HepG2 (cell line): ENCODE measurements at regions of chr16 and their contacts with region 1.

Region 1: GRCh38 chr16:31117391-31118197 is at the start of gene KAT8:
- DNase-seq: peak; percentile 99
- ATAC-seq: peak; percentile 93
- H3K4me3 ChIP-seq: peak within 1 kb of the TSS; percentile 67 to 83 (median 81)
- H3K27ac ChIP-seq: peak within 1 kb of the TSS; percentile 70
- H3K4me1 ChIP-seq: peaks cover 36% of the 10 kb centered on the region
- H3K27me3 ChIP-seq: no peaks in the 10 kb centered on the region; a peak in 1 of 5 replicates
- CTCF ChIP-seq: peak; percentile 10; the same call in 1 of the 2 replicates
- EP300 ChIP-seq: 0 out of 4 replicates have a peak, but pooled peaks of 1 of the 2 experiments have one; percentile 8
- POLR2A ChIP-seq: peak; percentile 80 to 94
- RAD21 ChIP-seq: peak; percentile 24; the same call in 1 of the 2 replicates
- total RNA-seq, gene KAT8: 69.5 and 79.0 TPM in 2 replicates

Region 2: GRCh38 chr16:30957456-30958174 is 160.0 kb before region 1 on chr16 and contains the start of gene SETD1A:
- CTCF ChIA-PET with region 1: no interaction called
- POLR2A ChIA-PET with region 1: interaction called, 15 read pairs
- in situ Hi-C with region 1: no loop called
- intact Hi-C with region 1: no loop called
- DNase-seq: peak; percentile 93
- ATAC-seq: peak; percentile 65
- H3K4me3 ChIP-seq: peak within 1 kb of the TSS; percentile 84 to 98 (median 93)
- H3K27ac ChIP-seq: peak within 1 kb of the TSS; percentile 97
- H3K4me1 ChIP-seq: peaks cover 56% of the 10 kb centered on the region
- H3K27me3 ChIP-seq: no peaks in the 10 kb centered on the region; a peak in 1 of 5 replicates
- CTCF ChIP-seq: 0 out of 2 replicates have a peak, but pooled peaks have one; percentile 4
- EP300 ChIP-seq: peak in 1 of 2 experiments; percentile 35; a peak in 2 of 4 replicates
- POLR2A ChIP-seq: no peak; a peak in 2 of 4 replicates
- RAD21 ChIP-seq: peak; percentile 47; the same call in 1 of the 2 replicates
- total RNA-seq, gene SETD1A: 3.6 and 5.6 TPM in 2 replicates

Region 3: DNA sequence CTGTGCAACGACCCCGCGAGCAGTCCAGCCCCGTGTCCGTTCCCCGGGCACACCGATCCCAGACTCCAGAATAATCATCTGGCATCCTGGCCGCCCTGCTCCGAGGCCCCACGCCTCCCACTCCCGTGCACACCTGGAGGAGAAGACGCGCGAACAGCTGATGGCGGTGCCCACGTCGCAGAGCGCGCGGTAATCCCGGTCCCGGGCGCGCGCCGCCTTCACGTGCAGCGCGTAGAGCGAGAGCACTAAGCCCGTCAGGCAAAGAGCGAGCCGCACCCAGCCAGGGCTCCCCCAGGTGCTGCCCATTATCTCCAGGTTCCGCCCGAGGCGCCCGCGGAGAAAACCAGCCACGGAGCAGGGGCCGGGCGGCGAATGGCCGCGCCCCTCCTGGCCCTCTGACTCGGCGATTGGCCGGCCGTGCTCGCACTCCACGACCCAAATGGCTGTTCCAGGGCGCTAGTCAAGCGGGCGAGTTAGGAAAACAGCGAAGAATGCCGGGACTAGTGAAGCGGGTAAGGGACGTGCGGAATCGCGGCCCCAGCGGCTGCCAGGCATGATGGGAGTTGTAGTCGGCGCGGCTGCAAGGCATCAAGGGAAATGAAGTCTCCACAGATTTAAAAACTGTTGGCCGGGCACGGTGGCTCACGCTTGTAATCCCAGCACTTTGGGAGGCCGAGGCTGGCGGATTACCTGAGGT is 23.0 kb before region 1 on chr16 and contains the start of gene VKORC1:
- CTCF ChIA-PET with region 1: no interaction called
- POLR2A ChIA-PET with region 1: interaction called, 32 read pairs
- in situ Hi-C with region 1: no loop called
- intact Hi-C with region 1: no loop called
- DNase-seq: peak; percentile 98
- ATAC-seq: peak; percentile 95
- H3K4me3 ChIP-seq: peak within 1 kb of the TSS; percentile 80 to 100 (median 82)
- H3K27ac ChIP-seq: peak within 1 kb of the TSS; percentile 84
- H3K4me1 ChIP-seq: peaks cover 27% of the 10 kb centered on the region
- H3K27me3 ChIP-seq: no peaks in the 10 kb centered on the region; a peak in 1 of 5 replicates
- CTCF ChIP-seq: peak; percentile 44
- EP300 ChIP-seq: peak in 1 of 2 experiments; percentile 44; a peak in 1 of 4 replicates
- POLR2A ChIP-seq: peak; percentile 84 to 90
- RAD21 ChIP-seq: peak; percentile 32; the same call in 1 of the 2 replicates
- total RNA-seq, gene VKORC1: 92.1 and 141 TPM in 2 replicates

Region 4: DNA sequence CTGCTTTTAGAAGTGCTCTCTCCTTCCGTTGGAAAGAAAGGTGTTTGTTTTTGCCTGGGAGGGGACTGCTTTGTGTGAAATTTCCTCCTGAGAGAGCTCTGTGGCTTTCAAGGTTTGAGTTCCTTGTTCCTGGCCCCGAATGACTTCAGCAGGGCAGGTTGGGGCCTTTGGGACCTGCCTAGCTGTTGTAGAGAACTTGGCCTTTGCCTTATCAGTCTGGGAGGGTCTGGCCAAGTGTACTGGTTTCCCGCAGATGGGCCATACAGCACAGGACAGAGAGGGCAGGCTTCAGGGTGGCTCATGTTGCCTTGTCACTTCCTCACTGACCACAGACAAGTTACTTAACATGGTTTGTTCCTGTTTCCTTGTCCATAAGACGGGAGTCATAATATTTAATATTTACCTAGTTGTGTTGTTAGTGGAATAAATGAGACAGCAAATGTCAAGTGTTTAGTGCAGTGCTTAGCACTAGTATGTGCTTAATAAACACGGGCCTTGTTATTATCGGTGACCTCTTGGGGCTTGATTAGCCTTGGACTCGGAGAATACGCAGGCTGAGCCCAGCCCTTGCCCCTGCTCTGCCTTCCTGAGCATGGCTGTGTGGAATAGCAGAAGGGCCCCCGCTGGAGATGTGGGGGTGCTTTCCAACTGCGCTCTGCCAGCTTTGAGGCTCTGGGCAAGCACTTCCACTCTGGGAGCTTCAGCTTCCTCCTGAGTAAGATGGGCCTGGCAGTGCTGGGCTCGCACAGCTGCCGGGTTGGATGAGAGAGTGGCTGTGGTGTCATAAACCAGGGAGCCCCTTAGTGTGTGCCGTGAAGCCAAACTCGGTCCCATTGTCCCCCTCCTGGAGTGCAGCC is 11.3 kb after region 1 on chr16:
- CTCF ChIA-PET with region 1: no interaction called
- POLR2A ChIA-PET with region 1: interaction called, 275 read pairs
- in situ Hi-C with region 1: no loop called
- intact Hi-C with region 1: no loop called
- DNase-seq: no peak
- ATAC-seq: no peak
- H3K4me3 ChIP-seq: no peak overlapping the region
- H3K27ac ChIP-seq: no peak overlapping the region
- H3K4me1 ChIP-seq: peaks cover 4% of the 10 kb centered on the region; the same call in 1 of the 2 replicates
- H3K27me3 ChIP-seq: no peaks in the 10 kb centered on the region
- CTCF ChIP-seq: no peak
- EP300 ChIP-seq: no peak
- POLR2A ChIP-seq: no peak
- RAD21 ChIP-seq: no peak

Region 5: DNA sequence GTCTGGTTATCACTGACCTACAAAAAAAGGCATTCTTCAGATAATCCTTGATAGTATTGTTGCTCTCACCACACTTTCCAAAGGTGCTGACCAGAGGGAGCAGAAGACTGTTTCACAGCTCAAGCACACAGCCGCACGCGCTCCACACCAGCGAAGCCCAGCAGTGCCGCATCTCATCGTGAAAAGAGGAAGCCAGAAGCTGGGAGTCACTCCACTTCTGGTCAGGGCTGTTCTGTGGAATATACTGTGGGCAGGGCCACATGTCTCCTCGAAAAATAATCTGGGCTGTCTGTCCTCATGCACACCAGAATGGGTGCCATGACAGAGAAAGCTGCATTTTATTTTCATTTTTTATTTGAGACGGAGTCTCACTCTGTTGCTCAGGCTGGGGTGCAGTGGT is 39.5 kb after region 1 on chr16:
- CTCF ChIA-PET with region 1: no interaction called
- POLR2A ChIA-PET with region 1: no interaction called
- in situ Hi-C with region 1: no loop called
- intact Hi-C with region 1: no loop called
- DNase-seq: no peak
- ATAC-seq: peak; percentile 57
- H3K4me3 ChIP-seq: no peak overlapping the region
- H3K27ac ChIP-seq: no peak overlapping the region
- H3K4me1 ChIP-seq: peaks cover 8% of the 10 kb centered on the region
- H3K27me3 ChIP-seq: peaks cover 4 to 32% of the 10 kb centered on the region in 2 experiments; a peak in 4 of 5 replicates
- CTCF ChIP-seq: no peak
- EP300 ChIP-seq: no peak
- POLR2A ChIP-seq: no peak
- RAD21 ChIP-seq: no peak

Region 6: DNA sequence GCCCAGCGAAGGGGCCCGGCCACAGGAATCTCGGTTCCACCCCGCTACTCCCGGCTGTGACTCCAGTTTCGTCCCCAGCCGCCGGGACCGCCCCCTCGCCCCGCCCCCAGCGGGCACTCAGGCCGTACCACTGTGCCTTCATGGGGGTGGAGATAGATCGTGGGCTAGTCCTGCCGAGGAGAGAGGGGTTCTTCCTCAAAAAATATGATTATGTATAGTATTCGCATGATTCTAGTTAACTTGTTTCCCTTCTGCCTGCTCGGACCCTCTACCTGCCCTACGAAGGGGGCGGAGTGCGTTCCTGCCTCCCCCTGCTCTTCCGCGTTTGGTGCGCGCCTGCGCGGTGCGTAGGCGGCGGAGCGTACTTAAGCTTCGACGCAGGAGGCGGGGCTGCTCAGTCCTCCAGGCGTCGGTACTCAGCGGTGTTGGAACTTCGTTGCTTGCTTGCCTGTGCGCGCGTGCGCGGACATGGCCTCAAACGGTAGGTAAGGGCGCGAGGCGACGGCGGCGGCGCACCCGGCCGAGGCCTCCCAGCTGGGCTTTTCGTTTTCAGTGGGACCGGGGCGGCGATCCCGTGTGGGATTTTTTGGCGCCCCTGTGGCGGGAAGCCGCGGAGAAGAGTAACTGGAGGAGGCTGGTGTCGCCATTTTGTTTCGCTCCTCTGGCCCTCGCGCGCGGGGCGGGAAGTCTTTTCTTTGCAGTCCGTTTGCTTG is 62.3 kb after region 1 on chr16 and contains the start of gene FUS:
- CTCF ChIA-PET with region 1: no interaction called
- POLR2A ChIA-PET with region 1: interaction called, 41 read pairs
- in situ Hi-C with region 1: no loop called
- intact Hi-C with region 1: no loop called
- DNase-seq: peak; percentile 84
- ATAC-seq: peak; percentile 74
- H3K4me3 ChIP-seq: peak within 1 kb of the TSS; percentile 90 to 93 (median 93)
- H3K27ac ChIP-seq: peak within 1 kb of the TSS; percentile 94
- H3K4me1 ChIP-seq: peaks cover 50% of the 10 kb centered on the region
- H3K27me3 ChIP-seq: no peaks in the 10 kb centered on the region; a peak in 1 of 5 replicates
- CTCF ChIP-seq: peak; percentile 4
- EP300 ChIP-seq: peak in 1 of 2 experiments; percentile 28; a peak in 1 of 4 replicates
- POLR2A ChIP-seq: peak; percentile 99 to 100
- RAD21 ChIP-seq: 0 out of 2 replicates have a peak, but pooled peaks have one; percentile 27
- total RNA-seq, gene FUS: 64.8 and 68.1 TPM in 2 replicates